WTC11 (cell line): ENCODE measurements at regions of chr1 and their contacts with region 1.

Region 1: DNA sequence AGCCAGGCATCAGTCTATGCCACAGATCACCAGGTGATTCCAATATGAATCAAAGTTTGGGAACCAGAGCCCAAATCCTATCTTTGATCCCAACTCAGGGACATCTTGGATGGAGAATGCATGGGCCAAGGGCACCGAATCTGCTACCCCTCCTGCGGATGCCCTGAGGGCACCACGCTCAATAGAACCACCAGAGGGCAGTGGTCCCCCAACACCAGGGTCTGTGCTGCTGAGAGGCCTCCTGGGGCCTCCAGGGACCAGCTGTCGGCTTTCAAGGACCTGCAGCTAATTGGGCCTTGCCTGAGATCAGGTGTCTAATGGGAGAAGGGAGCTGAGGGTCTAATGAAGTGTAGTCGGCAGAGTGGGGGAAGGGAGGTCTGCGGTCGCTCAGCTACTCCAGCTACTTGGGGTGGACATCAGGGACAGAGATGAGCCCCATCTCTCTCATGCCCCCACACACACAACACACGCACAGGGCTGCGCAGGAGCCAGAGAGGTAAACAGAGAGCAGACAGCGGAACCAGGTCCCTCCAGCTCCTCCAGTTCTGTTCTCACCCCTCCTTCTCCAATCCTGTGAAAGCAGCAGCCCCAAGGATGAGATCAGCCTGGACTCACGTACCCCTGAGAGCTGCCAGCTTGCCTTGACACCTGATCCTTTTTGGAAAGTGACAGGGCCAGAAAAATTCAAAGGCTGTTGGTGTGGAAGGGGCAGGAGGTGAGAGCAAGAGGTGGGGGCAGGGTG is 34.9 kb upstream of the PPP1R15B start:
- DNase-seq: peak; percentile 90
- ATAC-seq: peak; percentile 88
- H3K4me3 Mint-ChIP-seq: no peak overlapping the region
- H3K27ac Mint-ChIP-seq: peak overlapping the region; percentile 84
- H3K4me1 Mint-ChIP-seq: peaks cover 35% of the 10 kb centered on the region
- H3K27me3 Mint-ChIP-seq: no peaks in the 10 kb centered on the region
- CTCF ChIP-seq: peak; percentile 57

Region 2: GRCh38 chr1:204377795-204378608 is 68.5 kb before region 1 on chr1:
- CTCF ChIA-PET with region 1: interaction called, 20 read pairs
- POLR2A ChIA-PET with region 1: no interaction called
- DNase-seq: peak; percentile 72
- ATAC-seq: peak; percentile 85
- H3K4me3 Mint-ChIP-seq: peak overlapping the region; percentile 85
- H3K27ac Mint-ChIP-seq: peak overlapping the region; percentile 82; the same call in 1 of the 2 replicates
- H3K4me1 Mint-ChIP-seq: peaks cover 9% of the 10 kb centered on the region
- H3K27me3 Mint-ChIP-seq: peaks cover 36% of the 10 kb centered on the region
- CTCF ChIP-seq: no peak

Region 3: GRCh38 chr1:204390751-204391466 is 55.6 kb before region 1 on chr1:
- CTCF ChIA-PET with region 1: no interaction called
- POLR2A ChIA-PET with region 1: no interaction called
- DNase-seq: no peak
- ATAC-seq: no peak
- H3K4me3 Mint-ChIP-seq: no peak overlapping the region
- H3K27ac Mint-ChIP-seq: no peak overlapping the region
- H3K4me1 Mint-ChIP-seq: no peaks in the 10 kb centered on the region
- H3K27me3 Mint-ChIP-seq: no peaks in the 10 kb centered on the region; the same call in 1 of the 2 replicates
- CTCF ChIP-seq: no peak

Region 4: GRCh38 chr1:204431310-204432165 is 15.0 kb before region 1 on chr1:
- CTCF ChIA-PET with region 1: interaction called, 91 read pairs
- POLR2A ChIA-PET with region 1: no interaction called
- DNase-seq: peak; percentile 84
- ATAC-seq: peak; percentile 90
- H3K4me3 Mint-ChIP-seq: no peak overlapping the region
- H3K27ac Mint-ChIP-seq: peak overlapping the region; percentile 69; the same call in 1 of the 2 replicates
- H3K4me1 Mint-ChIP-seq: no peaks in the 10 kb centered on the region
- H3K27me3 Mint-ChIP-seq: no peaks in the 10 kb centered on the region
- CTCF ChIP-seq: peak; percentile 89

Region 5: DNA sequence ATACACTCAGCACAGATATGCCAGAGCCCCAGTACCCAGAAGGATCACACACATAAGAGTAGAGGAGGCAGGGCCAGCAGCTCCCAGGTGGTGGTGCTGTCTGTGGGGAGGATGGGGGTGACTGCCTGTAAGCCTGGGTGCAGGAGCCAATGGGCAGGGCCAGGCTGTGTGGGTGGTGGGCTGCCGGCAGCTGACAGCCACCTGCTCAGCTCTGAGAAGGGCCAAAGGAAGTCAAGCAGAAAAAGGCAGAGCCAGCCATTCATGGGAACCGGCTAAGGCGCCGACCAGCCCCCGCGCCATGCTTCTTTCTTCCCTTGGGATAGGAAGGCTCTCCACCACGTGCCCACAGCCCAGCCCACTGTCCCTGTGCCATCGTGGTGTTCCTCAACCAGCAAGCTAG is 34.0 kb after region 1 on chr1:
- CTCF ChIA-PET with region 1: interaction called, 130 read pairs
- POLR2A ChIA-PET with region 1: no interaction called
- DNase-seq: no peak
- ATAC-seq: no peak
- H3K4me3 Mint-ChIP-seq: no peak overlapping the region
- H3K27ac Mint-ChIP-seq: no peak overlapping the region
- H3K4me1 Mint-ChIP-seq: peaks cover 61% of the 10 kb centered on the region
- H3K27me3 Mint-ChIP-seq: no peaks in the 10 kb centered on the region; the same call in 1 of the 2 replicates
- CTCF ChIP-seq: no peak

Region 6: DNA sequence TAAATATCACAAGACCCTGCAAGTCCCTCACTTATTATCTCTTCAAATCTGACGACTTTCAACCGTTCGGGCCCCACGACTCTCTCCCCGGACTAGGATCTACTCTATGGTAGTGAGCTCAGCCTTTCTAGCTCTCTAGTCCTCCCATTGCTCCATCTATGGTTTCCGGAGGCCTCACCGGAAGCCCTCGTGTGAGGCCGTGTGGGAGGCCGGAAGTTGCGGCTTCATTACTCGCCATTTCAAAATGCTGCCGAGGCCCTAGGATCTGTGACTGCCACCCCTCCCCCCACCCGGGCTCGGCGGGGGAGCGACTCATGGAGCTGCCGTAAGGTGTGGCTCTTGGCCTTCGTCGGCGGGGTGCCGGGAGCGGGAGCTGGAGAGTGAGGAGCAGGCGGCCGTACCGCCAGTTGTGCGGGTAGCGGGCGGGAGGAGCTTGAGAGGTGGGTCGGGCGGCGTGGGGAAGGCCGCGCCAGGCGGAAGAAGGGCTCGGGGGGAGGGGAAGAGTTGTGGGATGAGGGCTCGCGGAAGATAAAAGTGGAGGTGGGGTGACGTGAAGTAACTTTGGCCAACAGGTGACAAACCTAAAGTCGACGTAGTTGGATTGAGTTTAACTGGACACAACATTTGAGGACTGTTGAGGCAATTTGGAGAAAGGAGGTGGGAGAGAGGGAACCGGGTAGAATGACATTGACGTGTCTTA is 69.8 kb after region 1 on chr1 and contains the start of gene MDM4:
- CTCF ChIA-PET with region 1: interaction called, 30 read pairs
- POLR2A ChIA-PET with region 1: interaction called, 4 read pairs
- DNase-seq: peak; percentile 91
- ATAC-seq: peak; percentile 98
- H3K4me3 Mint-ChIP-seq: no peak within 1 kb of the TSS
- H3K27ac Mint-ChIP-seq: no peak within 1 kb of the TSS
- H3K4me1 Mint-ChIP-seq: peaks cover 12% of the 10 kb centered on the region
- H3K27me3 Mint-ChIP-seq: peaks cover under 1% of the 10 kb centered on the region; the same call in 1 of the 2 replicates
- CTCF ChIP-seq: no peak
- total RNA-seq, gene MDM4: 73.5 to 76.2 TPM (median 74.1 TPM) in 3 replicates

Region 7: GRCh38 chr1:204791453-204792353 is 345.2 kb after region 1 on chr1:
- CTCF ChIA-PET with region 1: interaction called, 14 read pairs
- POLR2A ChIA-PET with region 1: no interaction called
- DNase-seq: peak; percentile 95
- ATAC-seq: peak; percentile 96
- H3K4me3 Mint-ChIP-seq: no peak overlapping the region
- H3K27ac Mint-ChIP-seq: no peak overlapping the region
- H3K4me1 Mint-ChIP-seq: peaks cover 12% of the 10 kb centered on the region
- H3K27me3 Mint-ChIP-seq: peaks cover 11% of the 10 kb centered on the region
- CTCF ChIP-seq: peak; percentile 90